CD14-positive monocyte (primary cell): ENCODE measurements at regions of chr19 and their contacts with region 1.

Region 1: GRCh38 chr19:12440541-12441316 is at the start of gene ZNF443:
- DNase-seq: peak; percentile 90 to 94 (median 92)
- H3K4me3 ChIP-seq: peak within 1 kb of the TSS; percentile 82 to 95 (median 91)
- H3K4me3 Mint-ChIP-seq: peak within 1 kb of the TSS; percentile 100
- H3K27ac ChIP-seq: peak within 1 kb of the TSS; percentile 40 to 65
- H3K27ac Mint-ChIP-seq: peak within 1 kb of the TSS; percentile 83 to 96 (median 93)
- H3K4me1 ChIP-seq: peaks cover 11 to 14% of the 10 kb centered on the region in 2 donors
- H3K4me1 Mint-ChIP-seq: peaks cover 26% of the 10 kb centered on the region
- H3K27me3 ChIP-seq: no peaks in the 10 kb centered on the region
- H3K27me3 Mint-ChIP-seq: peaks cover 0 to 5% (median 0%) of the 10 kb centered on the region in 3 donors
- CTCF ChIP-seq: no peak
- polyA plus RNA-seq, gene ZNF443: 0.24 to 1.00 (median 0.52) TPM

Region 2: GRCh38 chr19:12294249-12295158 is 146.2 kb before region 1 on chr19 and contains the start of gene ZNF44:
- intact Hi-C with region 1: no loop called
- DNase-seq: peak; percentile 94 to 97 (median 96)
- H3K4me3 ChIP-seq: peak within 1 kb of the TSS; percentile 76 to 91 (median 80)
- H3K4me3 Mint-ChIP-seq: peak within 1 kb of the TSS; percentile 100
- H3K27ac ChIP-seq: peak within 1 kb of the TSS; percentile 69 to 82
- H3K27ac Mint-ChIP-seq: peak within 1 kb of the TSS; percentile 96 to 100 (median 98)
- H3K4me1 ChIP-seq: peaks cover 8 to 11% of the 10 kb centered on the region in 2 donors
- H3K4me1 Mint-ChIP-seq: peaks cover 34% of the 10 kb centered on the region
- H3K27me3 ChIP-seq: no peaks in the 10 kb centered on the region
- H3K27me3 Mint-ChIP-seq: peaks cover 0 to 8% (median 6%) of the 10 kb centered on the region in 3 donors
- CTCF ChIP-seq: no peak
- polyA plus RNA-seq, gene ZNF44: 6.7 to 10.1 (median 9.7) TPM

Region 3: DNA sequence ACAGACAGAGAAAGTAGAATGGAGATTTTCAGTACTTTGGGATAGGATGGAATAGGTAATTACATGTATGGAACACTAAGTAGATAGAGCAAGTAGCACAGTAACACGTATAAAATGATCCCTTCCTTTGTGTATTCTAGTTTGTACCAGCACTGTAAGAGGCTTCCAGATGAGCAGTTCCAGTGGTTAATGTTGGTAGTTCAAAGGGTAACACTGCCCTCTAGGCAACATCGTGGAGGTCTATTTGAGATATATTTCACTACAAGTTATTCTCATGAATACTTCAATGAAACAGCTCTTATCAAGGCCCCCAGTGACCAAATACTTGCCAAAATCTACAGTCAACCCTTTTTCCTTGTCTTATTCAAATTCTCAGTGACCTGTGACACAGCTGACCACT is 93.8 kb before region 1 on chr19:
- intact Hi-C with region 1: loop called in 1 of 2 experiments (anchors 5 kb)
- DNase-seq: no peak
- H3K4me3 ChIP-seq: no peak overlapping the region
- H3K4me3 Mint-ChIP-seq: no peak overlapping the region
- H3K27ac ChIP-seq: no peak overlapping the region
- H3K27ac Mint-ChIP-seq: no peak overlapping the region
- H3K4me1 ChIP-seq: no peaks in the 10 kb centered on the region
- H3K4me1 Mint-ChIP-seq: no peaks in the 10 kb centered on the region
- H3K27me3 ChIP-seq: no peaks in the 10 kb centered on the region
- H3K27me3 Mint-ChIP-seq: peaks cover 0 to 1% (median 0%) of the 10 kb centered on the region in 3 donors
- CTCF ChIP-seq: no peak

Region 4: DNA sequence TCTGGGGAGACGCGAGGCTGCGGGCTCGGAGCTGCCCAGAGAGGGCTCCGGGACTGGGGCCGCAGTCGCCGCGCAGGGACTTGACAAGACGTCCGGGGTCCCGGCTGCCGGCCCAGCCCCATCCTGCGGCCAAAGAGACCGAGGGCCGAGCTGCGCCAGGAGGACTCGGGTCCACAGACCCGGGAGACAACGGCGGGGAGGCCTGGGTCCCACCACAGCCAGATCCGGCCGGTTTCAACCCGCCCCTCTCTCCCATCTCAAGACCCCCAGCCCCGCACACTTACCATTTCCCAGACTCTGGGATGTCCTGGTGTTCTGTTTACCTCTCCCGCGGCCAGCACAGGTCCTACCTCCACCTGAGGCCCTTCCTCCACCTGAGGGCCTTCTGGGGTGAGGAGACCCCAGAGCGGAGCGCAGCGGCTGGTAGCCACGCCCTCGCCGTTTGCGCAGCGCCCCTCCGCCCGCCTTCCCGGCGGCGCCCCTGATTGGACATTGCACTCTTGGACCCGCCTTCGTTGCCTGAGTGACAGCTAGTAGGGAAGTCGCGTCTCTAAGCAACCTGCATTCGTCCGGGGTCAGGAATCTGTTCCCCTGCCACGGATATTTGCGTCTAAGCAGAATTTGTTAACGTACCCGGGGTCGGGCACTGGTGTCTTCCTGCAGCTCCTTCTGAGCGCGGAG is 43.8 kb after region 1 on chr19 and contains the start of gene ZNF709:
- intact Hi-C with region 1: loop called in 1 of 2 experiments (anchors 5 kb)
- DNase-seq: peak; percentile 72 to 80 (median 73)
- H3K4me3 ChIP-seq: peak within 1 kb of the TSS; percentile 75 to 98 (median 88)
- H3K4me3 Mint-ChIP-seq: peak within 1 kb of the TSS; percentile 87 to 94
- H3K27ac ChIP-seq: peak within 1 kb of the TSS in 1 of 2 donors; percentile 73
- H3K27ac Mint-ChIP-seq: peak within 1 kb of the TSS in 6 of 7 donors; percentile 33 to 81 (median 74)
- H3K4me1 ChIP-seq: peaks cover 12 to 21% of the 10 kb centered on the region in 2 donors
- H3K4me1 Mint-ChIP-seq: peaks cover 31% of the 10 kb centered on the region
- H3K27me3 ChIP-seq: no peaks in the 10 kb centered on the region
- H3K27me3 Mint-ChIP-seq: peaks cover 2 to 6% (median 5%) of the 10 kb centered on the region in 3 donors
- CTCF ChIP-seq: no peak
- polyA plus RNA-seq, gene ZNF709: 0.15 to 0.28 (median 0.19) TPM